B cell (primary cell): ENCODE measurements at regions of chr10 and their contacts with region 1.

Region 1: GRCh38 chr10:102132563-102133372 is at the start of gene PPRC1:
- DNase-seq: peak; percentile 98
- ATAC-seq: peak; percentile 94
- H3K4me3 ChIP-seq: peak within 1 kb of the TSS; percentile 70 to 97 (median 82)
- H3K4me3 Mint-ChIP-seq: peak within 1 kb of the TSS; percentile 94
- H3K27ac ChIP-seq: peak within 1 kb of the TSS; percentile 79 to 88
- H3K27ac Mint-ChIP-seq: peak within 1 kb of the TSS; percentile 94
- H3K4me1 ChIP-seq: peaks cover 18 to 25% of the 10 kb centered on the region in 2 donors
- H3K4me1 Mint-ChIP-seq: peaks cover 36% of the 10 kb centered on the region
- H3K27me3 ChIP-seq: no peaks in the 10 kb centered on the region
- H3K27me3 Mint-ChIP-seq: no peaks in the 10 kb centered on the region
- CTCF ChIP-seq: peak; percentile 96
- total RNA-seq, gene PPRC1: 35.3 and 36.3 TPM in 2 replicates

Region 2: DNA sequence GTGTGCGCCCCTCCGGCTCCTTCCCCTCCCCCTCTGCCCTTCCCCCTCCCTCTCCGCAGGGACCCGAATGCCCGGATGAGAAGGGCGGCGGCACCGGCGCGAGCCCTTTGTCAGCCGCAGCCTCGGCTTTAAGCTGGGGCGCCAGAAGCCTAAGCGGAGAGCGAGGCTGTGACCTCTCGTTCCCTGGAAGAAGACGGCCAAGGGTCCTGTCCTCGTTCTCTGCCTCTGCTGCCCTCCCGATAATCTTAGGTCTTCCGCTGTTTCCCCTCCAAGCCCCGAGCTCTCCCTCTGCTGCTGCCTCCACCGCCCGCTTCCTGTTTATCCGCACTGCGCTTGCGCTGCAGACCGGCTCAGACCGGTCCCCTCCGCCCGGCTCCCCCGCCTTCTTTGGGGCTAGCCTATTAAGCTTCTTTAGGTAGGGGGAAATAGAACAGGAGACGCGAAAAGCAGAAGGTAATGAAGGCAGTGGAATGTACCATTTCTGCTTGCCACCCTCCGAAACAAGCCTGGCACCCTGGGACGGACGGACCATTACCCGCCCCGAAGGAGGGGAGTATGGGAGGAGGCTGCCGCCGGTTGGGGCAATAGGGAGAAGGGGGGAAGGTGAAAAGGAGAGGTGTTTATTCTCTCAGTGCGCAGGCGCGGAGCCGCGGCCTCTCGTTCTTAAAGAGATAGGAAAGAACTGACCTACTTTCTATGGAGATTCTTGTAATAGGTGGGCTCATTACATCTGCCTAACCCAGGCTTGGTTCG is 314.5 kb before region 1 on chr10 and contains the start of gene OGA:
- CTCF ChIA-PET with region 1: no interaction called
- POLR2A ChIA-PET with region 1: no interaction called
- intact Hi-C with region 1: loop called (anchors 5 kb)
- DNase-seq: peak; percentile 98
- ATAC-seq: peak; percentile 87
- H3K4me3 ChIP-seq: peak within 1 kb of the TSS; percentile 56 to 97 (median 92)
- H3K4me3 Mint-ChIP-seq: peak within 1 kb of the TSS; percentile 94
- H3K27ac ChIP-seq: peak within 1 kb of the TSS; percentile 81 to 85
- H3K27ac Mint-ChIP-seq: peak within 1 kb of the TSS; percentile 99
- H3K4me1 ChIP-seq: peaks cover 27% of the 10 kb centered on the region in 2 donors
- H3K4me1 Mint-ChIP-seq: peaks cover 35% of the 10 kb centered on the region
- H3K27me3 ChIP-seq: no peaks in the 10 kb centered on the region
- H3K27me3 Mint-ChIP-seq: no peaks in the 10 kb centered on the region
- CTCF ChIP-seq: no peak
- total RNA-seq, gene OGA: 418 and 442 TPM in 2 replicates

Region 3: DNA sequence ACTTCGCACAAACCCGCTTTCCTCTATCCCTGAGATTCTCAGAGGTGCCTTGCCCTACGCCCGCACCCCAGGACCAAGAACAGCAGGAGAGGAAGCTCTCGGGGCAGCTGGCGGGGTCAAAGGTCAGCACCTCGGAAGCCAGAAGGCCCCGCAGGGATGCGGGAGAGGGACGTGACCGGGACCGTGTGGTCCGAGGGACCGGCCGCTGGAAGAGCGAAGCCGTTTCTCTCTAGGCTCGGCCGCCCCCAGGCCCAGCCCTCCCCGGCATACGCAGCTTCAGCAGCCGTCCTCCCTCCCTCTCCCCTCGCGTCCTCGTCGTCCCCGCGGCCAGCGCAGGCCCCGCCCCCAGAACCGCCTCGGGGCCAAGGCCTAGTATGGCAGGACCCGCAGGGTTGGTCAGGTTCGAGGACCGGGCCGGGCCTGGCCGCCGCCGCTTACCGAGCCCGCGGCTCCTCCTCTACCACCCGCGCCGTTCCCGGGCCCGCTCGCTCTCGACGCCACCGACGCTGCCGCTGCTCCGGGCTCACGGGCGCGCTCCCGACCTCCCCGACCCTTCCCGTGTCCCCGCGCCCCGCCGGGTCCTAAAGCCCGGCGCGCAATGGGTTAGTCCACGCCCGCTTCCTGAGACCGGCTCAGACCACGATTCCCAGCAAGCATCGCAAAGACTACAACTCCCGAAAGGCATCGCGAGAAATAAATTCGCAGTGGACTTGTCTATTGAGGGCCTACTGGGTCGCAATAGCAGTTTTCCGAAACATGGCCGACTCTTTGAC is 76.9 kb before region 1 on chr10 and contains the start of gene ARMH3:
- CTCF ChIA-PET with region 1: no interaction called
- POLR2A ChIA-PET with region 1: no interaction called
- intact Hi-C with region 1: loop called (anchors 1 kb)
- DNase-seq: peak; percentile 94
- ATAC-seq: peak; percentile 91
- H3K4me3 ChIP-seq: peak within 1 kb of the TSS; percentile 76 to 99 (median 93)
- H3K4me3 Mint-ChIP-seq: peak within 1 kb of the TSS; percentile 99
- H3K27ac ChIP-seq: peak within 1 kb of the TSS; percentile 75 to 80
- H3K27ac Mint-ChIP-seq: peak within 1 kb of the TSS; percentile 98
- H3K4me1 ChIP-seq: peaks cover 15 to 26% of the 10 kb centered on the region in 2 donors
- H3K4me1 Mint-ChIP-seq: peaks cover 36% of the 10 kb centered on the region
- H3K27me3 ChIP-seq: no peaks in the 10 kb centered on the region
- H3K27me3 Mint-ChIP-seq: no peaks in the 10 kb centered on the region
- CTCF ChIP-seq: no peak
- total RNA-seq, gene ARMH3: 36.2 and 40.7 TPM in 2 replicates

Region 4: GRCh38 chr10:102114861-102115618 is 17.7 kb before region 1 on chr10:
- CTCF ChIA-PET with region 1: interaction called, 14 read pairs
- POLR2A ChIA-PET with region 1: no interaction called
- intact Hi-C with region 1: loop called (anchors 1 kb)
- DNase-seq: peak; percentile 87
- ATAC-seq: peak; percentile 79
- H3K4me3 ChIP-seq: peak overlapping the region; percentile 45 to 64 (median 57)
- H3K4me3 Mint-ChIP-seq: peak overlapping the region; percentile 86
- H3K27ac ChIP-seq: peak overlapping the region; percentile 60 to 94
- H3K27ac Mint-ChIP-seq: peak overlapping the region; percentile 91
- H3K4me1 ChIP-seq: peaks cover 58 to 73% of the 10 kb centered on the region in 2 donors
- H3K4me1 Mint-ChIP-seq: peaks cover 63% of the 10 kb centered on the region
- H3K27me3 ChIP-seq: no peaks in the 10 kb centered on the region
- H3K27me3 Mint-ChIP-seq: no peaks in the 10 kb centered on the region
- CTCF ChIP-seq: no peak

Region 5: DNA sequence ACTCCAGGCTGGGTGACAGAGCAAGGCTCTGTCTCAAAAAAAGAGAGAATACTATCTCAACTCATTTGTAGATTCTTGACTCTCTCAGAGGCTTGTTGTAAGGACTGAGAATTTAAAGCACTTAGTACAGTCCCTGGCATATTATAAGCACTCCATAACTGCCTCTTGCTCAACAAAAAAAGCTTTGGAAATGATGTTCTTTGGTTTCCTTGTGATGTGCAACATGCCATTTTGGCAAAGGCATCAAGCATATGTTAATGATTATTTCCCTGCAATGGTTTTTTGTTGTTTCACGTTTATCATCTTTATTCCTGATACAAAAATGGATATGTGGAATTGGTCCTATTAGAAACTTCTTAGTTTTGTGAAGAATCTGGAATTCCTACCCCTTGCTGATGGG is 35.1 kb after region 1 on chr10:
- CTCF ChIA-PET with region 1: interaction called, 6 read pairs
- POLR2A ChIA-PET with region 1: no interaction called
- intact Hi-C with region 1: loop called (anchors 1 kb)
- DNase-seq: no peak
- ATAC-seq: no peak
- H3K4me3 ChIP-seq: no peak overlapping the region
- H3K4me3 Mint-ChIP-seq: no peak overlapping the region
- H3K27ac ChIP-seq: no peak overlapping the region
- H3K27ac Mint-ChIP-seq: no peak overlapping the region
- H3K4me1 ChIP-seq: peaks cover 7 to 8% of the 10 kb centered on the region in 2 donors
- H3K4me1 Mint-ChIP-seq: peaks cover 6% of the 10 kb centered on the region
- H3K27me3 ChIP-seq: no peaks in the 10 kb centered on the region
- H3K27me3 Mint-ChIP-seq: no peaks in the 10 kb centered on the region
- CTCF ChIP-seq: no peak